Cardiac septum (tissue), 1 donor: ENCODE measurements at regions of chr4 and their contacts with region 1.

Region 1: DNA sequence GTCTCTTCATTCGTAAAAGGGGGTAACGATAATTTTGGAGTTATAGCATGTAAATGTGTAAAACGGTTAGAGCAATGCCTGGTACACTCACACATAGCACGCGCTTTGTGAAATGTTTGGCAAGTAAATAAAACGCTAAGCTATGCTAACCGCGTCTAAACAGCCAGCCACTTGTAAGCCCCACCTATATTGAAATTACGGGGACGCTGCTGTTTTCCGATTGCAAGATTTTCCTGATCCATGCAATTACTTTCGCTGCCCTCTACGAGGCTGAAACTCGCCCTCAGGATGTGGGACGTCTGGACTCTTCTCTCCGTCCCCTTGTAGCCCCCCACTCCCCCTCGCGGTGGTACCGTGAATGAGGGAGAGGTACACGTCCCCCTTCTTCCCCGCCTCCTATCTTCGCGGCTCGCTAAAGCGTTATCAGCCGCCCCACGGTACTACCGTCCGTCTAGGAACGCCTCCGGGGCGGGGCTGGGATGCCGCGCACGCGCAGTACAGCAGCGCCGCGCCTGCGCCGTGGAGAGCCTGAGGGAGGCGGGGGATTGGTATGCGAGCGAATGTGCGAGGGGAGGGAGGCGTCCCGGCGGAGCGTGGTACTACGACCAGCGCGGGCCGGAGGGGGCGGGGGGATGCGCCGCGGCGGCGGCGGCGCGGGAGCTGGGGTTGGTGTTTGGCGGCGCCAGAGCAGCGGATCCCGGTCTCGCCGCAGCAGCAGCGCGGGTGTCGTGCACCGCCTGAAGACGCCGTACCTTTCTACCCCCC is at the start of gene STIM2:
- DNase-seq: peak; percentile 99
- total RNA-seq, gene STIM2: 10.1 TPM

Region 2: GRCh38 chr4:26319467-26319948 is 540.8 kb before region 1 on chr4:
- intact Hi-C with region 1: loop called (anchors 5 kb)
- DNase-seq: peak; percentile 98

Region 3: DNA sequence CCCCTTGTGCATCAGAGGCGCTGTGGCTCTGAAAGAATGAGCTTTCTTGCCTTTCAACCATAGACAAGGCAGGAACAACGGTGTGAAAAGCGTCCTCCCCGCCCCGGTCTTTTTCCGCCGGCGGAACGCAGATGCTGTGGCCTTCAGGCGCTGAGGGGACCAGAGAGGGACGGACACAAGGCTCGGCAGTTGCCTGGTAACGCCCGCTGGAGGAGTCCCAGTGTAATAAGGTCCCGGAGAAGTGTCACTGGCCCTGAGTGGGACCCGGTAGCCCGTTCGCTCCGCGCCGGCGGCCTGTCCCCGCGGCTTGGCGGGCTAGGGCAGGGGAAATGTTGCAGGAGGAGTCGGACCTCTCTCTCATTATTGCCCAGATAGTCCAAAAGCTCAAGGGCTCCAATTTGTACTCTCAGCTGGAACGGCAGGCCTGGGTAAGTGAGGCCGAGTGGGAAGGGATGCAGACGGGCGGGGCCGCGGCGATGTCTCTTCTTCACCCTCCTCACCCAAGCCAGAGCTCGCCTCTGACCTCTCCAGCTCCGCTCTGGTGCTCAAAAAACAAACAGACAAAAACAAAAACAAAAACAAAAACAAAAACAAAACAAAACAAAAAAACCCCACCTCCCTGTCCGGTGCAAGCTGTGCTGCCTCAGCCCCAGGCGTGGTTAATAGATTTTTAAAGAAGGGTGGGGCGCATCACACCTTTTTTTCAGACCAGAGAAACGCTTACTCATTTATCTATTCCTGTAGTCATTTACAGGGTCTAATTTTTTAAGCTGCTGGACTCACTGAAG is 276.3 kb before region 1 on chr4 and contains the start of gene TBC1D19:
- intact Hi-C with region 1: loop called (anchors 1 kb)
- DNase-seq: peak; percentile 93
- total RNA-seq, gene TBC1D19: 8.9 TPM

Region 4: GRCh38 chr4:26812049-26812714 is 48.2 kb before region 1 on chr4:
- intact Hi-C with region 1: loop called (anchors 5 kb)
- DNase-seq: no peak

Region 5: GRCh38 chr4:26992657-26993361 is 132.5 kb after region 1 on chr4:
- intact Hi-C with region 1: loop called (anchors 5 kb)
- DNase-seq: no peak

Region 6: DNA sequence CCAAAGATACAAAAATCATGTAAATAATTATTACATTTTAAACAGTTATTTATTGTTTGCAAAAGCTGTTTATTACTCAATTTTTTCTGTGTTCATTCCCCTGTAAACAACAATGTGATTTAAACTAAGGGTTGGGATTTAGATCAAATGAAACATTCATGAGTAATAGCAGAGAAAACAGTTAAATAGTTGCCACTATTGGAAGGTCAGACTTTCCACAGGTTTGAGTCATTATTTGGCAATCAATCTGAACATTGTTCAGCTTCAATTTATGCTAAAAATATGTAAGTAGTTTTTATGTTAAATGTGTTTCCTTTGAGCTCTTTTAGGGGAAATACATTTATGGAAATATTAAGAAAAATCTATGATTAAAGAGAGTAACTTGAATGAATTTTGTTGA is 145.2 kb after region 1 on chr4:
- intact Hi-C with region 1: loop called (anchors 5 kb)
- DNase-seq: no peak